Activated B cell treated with CpG ODN at 0.5 μM for 24 hours (primary cell): ENCODE measurements at regions of chr2 and their contacts with region 1.

Region 1: GRCh38 chr2:175030380-175031271 is 25.4 kb upstream of the CHN1 start:
- DNase-seq: no peak
- ATAC-seq: no peak
- H3K4me3 Mint-ChIP-seq: no peak overlapping the region
- H3K27ac Mint-ChIP-seq: no peak overlapping the region
- H3K4me1 Mint-ChIP-seq: no peaks in the 10 kb centered on the region
- H3K27me3 Mint-ChIP-seq: no peaks in the 10 kb centered on the region
- CTCF ChIP-seq: no peak

Region 2: DNA sequence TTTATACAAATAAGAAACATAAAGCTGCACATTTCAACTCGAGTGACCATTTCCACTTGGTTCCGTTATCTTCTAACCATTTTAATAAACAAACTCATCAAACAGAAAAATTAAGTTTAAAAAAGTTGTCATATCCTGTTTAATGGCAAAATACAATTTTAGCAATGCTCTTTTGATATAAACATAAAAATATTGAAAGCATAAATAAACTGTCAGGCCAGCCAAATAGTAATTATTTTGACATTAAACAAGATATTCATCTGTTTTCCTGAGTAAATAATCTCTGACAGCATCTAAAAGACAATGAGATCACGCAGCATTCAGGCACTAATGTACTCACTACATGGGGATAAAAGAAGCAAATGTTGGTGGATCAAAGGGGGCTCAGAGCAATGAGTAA is 296.2 kb after region 1 on chr2:
- CTCF ChIA-PET with region 1: no interaction called
- POLR2A ChIA-PET with region 1: no interaction called
- intact Hi-C with region 1: loop called (anchors 5 kb)
- DNase-seq: no peak
- ATAC-seq: no peak
- H3K4me3 Mint-ChIP-seq: no peak overlapping the region
- H3K27ac Mint-ChIP-seq: no peak overlapping the region
- H3K4me1 Mint-ChIP-seq: no peaks in the 10 kb centered on the region
- H3K27me3 Mint-ChIP-seq: no peaks in the 10 kb centered on the region
- CTCF ChIP-seq: no peak